ENCODE measurements at regions of chr22 and their contacts with region 1.

Region 1: DNA sequence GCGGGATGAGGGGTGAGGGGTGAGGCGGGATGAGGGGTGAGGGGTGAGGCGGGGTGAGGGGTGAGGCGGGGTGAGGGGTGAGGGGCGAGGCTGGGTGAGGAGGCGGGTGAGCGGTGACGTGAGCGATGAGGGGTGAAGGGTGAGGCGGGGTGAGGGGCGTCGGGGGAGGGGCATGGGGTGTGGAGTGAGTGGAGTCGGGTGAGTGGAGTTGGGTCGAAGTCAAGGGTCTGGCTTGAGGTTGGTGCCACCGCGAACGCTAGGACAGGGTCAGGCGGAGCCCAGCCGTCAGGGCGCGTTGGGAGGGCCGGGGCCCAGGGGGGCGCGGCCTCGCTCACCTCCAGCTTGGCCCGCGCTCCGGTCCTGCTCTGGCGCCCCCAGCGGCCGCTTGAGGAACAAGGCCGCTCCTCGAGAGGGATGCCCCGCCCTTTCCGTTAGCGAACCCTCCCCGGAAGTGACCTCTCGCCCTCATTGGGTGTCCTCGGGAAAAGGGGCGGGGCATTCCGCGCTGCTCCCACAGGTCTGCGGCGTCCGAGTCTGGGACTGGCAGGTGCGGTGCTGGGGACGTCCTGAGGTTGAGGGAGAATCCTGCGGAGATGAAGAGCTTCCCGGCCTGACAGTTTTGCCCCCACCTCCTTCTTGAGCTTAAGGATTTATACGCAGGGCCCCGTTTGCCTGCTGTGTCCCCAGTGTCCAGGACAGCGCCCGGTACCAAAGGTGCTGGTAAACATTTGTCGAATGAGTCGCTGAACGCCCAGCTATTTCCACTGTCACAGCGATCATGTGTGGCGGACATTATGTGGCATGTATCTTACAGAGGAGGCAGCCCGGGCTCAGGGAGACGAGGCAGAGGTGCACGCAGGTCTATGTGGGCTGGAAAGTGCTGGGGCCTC is at the start of gene SYCE3:
- DNase-seq: peak; percentile 93 to 94 (median 93)
- H3K4me3 ChIP-seq: peak within 1 kb of the TSS; percentile 52 to 91 (median 81)
- H3K27ac ChIP-seq: peak within 1 kb of the TSS in 1 of 2 experiments; percentile 34
- H3K4me1 ChIP-seq: peaks cover 0 to 12% (median 9%) of the 10 kb centered on the region in 4 experiments
- H3K27me3 ChIP-seq: peaks cover 0 to 7% (median 0%) of the 10 kb centered on the region in 5 experiments

Region 2: DNA sequence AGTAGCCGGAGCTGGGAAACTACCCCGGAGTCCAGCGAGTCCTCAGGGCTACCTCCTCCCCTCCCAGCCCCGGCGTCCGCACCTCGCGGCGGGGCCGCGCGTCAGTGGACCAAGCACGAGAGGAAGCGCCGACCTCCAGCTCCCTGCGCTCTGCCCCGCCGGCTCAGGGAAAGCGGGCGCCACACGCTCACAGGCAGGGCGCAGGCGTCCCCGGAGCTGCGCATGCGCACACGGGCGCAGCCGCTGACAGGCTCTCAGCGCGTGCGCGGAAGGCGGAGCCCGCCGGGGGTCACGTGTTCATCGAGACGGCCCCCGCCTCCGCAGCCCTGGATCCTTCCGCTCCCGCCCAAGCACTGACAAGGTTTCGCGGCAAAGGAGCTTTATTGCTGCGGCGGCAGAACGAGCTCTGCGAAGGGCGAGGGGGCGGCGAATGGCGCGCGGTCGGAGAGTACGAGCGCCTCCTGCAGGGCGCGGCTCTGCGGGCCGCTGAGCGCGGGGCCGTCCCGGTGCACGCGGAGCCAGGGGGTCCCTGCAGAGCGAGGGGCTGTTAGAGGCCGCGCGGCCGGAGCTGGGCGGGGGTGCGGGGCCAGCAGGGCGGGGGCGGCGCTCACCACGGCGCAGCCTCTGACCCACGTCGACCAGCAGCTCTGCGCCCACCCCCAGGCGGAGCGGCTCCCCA is 37.2 kb before region 1 on chr22 and contains the start of gene SCO2:
- CTCF ChIA-PET with region 1: interaction called, 28 read pairs
- POLR2A ChIA-PET with region 1: interaction called, 6 read pairs
- DNase-seq: peak; percentile 97 to 98 (median 98)
- H3K4me3 ChIP-seq: peak within 1 kb of the TSS; percentile 65 to 82 (median 77)
- H3K27ac ChIP-seq: peak within 1 kb of the TSS; percentile 25 to 76
- H3K4me1 ChIP-seq: peaks cover 2 to 58% (median 45%) of the 10 kb centered on the region in 4 experiments
- H3K27me3 ChIP-seq: peaks cover 0 to 17% (median 0%) of the 10 kb centered on the region in 5 experiments

Region 3: DNA sequence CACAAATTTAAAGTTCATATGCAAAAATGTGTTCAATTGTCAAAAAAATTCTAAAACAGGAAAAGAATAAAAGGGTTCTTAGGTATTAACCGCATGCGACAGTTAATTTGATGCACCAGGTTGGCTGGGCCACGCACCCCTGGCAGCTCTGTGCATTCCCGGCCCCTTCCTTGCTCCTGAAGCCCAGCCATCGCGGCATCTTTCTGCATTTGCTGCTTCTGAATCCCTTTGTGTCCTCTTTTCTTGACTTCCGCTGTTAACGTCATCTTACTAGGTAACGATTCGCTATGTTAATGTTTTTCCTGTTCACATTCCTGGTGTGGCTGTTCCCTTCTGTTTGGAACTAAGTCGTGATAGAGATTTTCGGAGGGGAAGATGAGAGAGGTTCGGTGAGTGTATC is 25.0 kb before region 1 on chr22:
- CTCF ChIA-PET with region 1: interaction called, 10 read pairs
- POLR2A ChIA-PET with region 1: interaction called, 3 read pairs
- DNase-seq: no peak
- H3K4me3 ChIP-seq: no peak overlapping the region
- H3K27ac ChIP-seq: peak overlapping the region in 1 of 2 experiments; percentile 98
- H3K4me1 ChIP-seq: peaks cover 13 to 56% (median 35%) of the 10 kb centered on the region in 4 experiments
- H3K27me3 ChIP-seq: peaks cover 0 to 2% (median 0%) of the 10 kb centered on the region in 5 experiments

Region 4: GRCh38 chr22:50544078-50544745 is 18.6 kb before region 1 on chr22:
- CTCF ChIA-PET with region 1: interaction called, 12 read pairs
- POLR2A ChIA-PET with region 1: interaction called, 3 read pairs
- DNase-seq: peak; percentile 84 to 86 (median 85)
- H3K4me3 ChIP-seq: peak overlapping the region in 5 of 7 experiments; percentile 3 to 57 (median 40)
- H3K27ac ChIP-seq: no peak overlapping the region
- H3K4me1 ChIP-seq: peaks cover 8 to 75% (median 61%) of the 10 kb centered on the region in 4 experiments
- H3K27me3 ChIP-seq: peaks cover 0 to 28% (median 0%) of the 10 kb centered on the region in 5 experiments

Region 5: DNA sequence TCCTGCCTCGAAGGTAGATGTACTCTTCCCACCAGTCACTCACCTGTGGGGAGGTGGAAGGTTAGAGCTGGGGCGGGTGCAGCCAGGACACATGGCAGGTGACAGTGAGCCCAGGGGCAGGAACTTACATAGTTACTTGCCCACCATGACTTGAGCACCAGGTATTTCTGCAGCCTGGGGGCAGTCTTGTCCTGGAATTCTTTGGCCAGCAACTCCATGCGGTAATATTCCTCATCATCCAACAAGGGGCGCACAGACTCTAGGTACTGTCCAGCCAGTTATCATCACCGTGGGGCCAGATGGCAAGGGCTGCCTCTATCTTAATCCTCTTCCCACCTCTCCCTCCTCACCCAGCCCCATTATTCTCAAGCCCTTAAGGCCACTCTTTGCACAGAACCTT is 13.3 kb after region 1 on chr22:
- CTCF ChIA-PET with region 1: interaction called, 42 read pairs
- POLR2A ChIA-PET with region 1: interaction called, 6 read pairs
- DNase-seq: peak; percentile 44 to 51 (median 49)
- H3K4me3 ChIP-seq: no peak overlapping the region
- H3K27ac ChIP-seq: no peak overlapping the region
- H3K4me1 ChIP-seq: peaks cover 0 to 17% (median 8%) of the 10 kb centered on the region in 4 experiments
- H3K27me3 ChIP-seq: peaks cover 0 to 3% (median 0%) of the 10 kb centered on the region in 5 experiments

Region 6: GRCh38 chr22:50620593-50621355 is 58.0 kb after region 1 on chr22:
- CTCF ChIA-PET with region 1: interaction called, 12 read pairs
- POLR2A ChIA-PET with region 1: no interaction called
- DNase-seq: peak; percentile 74 to 92 (median 88)
- H3K4me3 ChIP-seq: peak overlapping the region in 6 of 7 experiments; percentile 61 to 82 (median 66)
- H3K27ac ChIP-seq: no peak overlapping the region
- H3K4me1 ChIP-seq: peaks cover 13 to 35% (median 29%) of the 10 kb centered on the region in 4 experiments
- H3K27me3 ChIP-seq: no peaks in the 10 kb centered on the region

Measured in common myeloid progenitor, CD34-positive (primary cell).